B cell (primary cell): ENCODE measurements at regions of chr1 and their contacts with region 1.

Region 1: DNA sequence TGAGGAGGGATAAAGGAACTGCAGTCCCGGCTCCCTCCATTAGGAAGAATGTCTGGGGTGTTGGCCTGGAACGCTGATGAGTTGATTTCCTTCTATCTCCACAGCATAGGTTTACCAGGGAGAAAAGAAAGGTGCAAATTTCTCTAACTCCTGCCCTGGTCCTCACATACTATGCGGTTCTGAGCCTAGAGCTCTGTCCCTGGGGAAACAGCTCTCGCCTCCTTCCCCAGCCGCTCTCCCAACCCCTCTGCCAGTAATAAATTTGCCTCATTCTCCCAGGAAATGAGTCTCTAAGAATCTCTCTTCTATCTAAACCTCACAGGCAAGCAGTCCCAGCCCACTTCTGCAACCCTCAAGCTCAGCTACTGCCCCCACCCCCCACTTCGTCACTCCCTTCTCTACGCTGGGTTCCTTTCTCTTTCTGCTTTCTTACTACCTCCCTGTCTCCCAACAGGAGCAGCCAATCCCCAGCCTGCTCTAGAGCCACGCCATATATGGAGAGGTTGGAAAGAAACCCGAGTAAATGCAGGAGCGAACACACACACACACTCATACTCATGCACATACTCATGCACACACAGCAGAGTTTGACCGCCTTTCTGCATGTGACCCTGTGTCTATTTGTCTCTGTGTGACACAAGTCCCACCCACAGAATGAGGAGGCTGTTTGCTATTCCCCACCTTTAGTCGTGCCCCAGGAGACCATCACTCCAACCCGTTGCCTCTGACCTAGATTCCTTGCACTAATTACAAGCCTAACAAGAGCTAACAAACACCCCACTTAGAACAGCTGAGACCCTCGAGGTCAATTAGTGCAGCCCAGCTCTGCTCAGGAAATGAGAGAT is 13.4 kb downstream of the PLEKHO1 start:
- DNase-seq: peak; percentile 73
- ATAC-seq: peak; percentile 10
- H3K4me3 ChIP-seq: peak overlapping the region; percentile 5 to 70 (median 28)
- H3K4me3 Mint-ChIP-seq: peak overlapping the region; percentile 93
- H3K27ac ChIP-seq: peak overlapping the region; percentile 95
- H3K27ac Mint-ChIP-seq: peak overlapping the region; percentile 99
- H3K4me1 ChIP-seq: peaks cover 78 to 88% of the 10 kb centered on the region in 2 donors
- H3K4me1 Mint-ChIP-seq: peaks cover 85% of the 10 kb centered on the region
- H3K27me3 ChIP-seq: no peaks in the 10 kb centered on the region
- H3K27me3 Mint-ChIP-seq: no peaks in the 10 kb centered on the region
- CTCF ChIP-seq: no peak

Region 2: DNA sequence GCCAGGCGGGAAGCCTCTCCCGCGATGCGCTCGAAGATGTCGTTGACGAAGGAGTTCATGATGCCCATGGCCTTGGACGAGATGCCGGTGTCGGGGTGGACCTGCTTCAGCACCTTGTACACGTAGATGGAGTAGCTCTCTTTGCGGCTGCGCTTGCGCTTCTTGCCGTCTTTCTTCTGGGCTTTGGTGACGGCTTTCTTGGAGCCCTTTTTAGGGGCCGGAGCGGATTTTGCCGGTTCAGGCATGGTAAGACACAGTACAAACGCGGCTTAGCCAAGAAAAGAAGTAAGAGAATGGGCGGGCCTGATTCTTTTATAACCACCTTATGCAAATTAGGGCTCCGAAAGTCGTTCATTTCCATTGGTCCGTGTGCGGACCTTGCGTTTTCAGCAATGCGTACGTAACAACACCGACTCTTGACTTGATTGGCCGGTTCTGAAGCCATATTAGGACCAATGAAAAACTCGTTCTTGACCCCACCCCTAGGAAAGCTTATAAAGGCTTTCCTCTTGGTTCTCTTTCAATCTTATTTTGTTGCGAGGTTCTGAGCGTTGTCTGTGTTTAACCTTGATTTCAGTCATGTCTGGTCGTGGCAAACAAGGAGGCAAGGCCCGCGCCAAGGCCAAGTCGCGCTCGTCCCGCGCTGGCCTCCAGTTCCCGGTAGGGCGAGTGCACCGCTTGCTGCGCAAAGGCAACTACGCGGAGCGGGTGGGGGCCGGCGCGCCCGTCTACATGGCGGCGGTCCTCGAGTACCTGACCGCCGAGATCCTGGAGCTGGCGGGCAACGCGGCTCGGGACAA is 276.5 kb before region 1 on chr1:
- CTCF ChIA-PET with region 1: interaction called, 8 read pairs
- POLR2A ChIA-PET with region 1: interaction called, 16 read pairs
- intact Hi-C with region 1: no loop called
- DNase-seq: peak; percentile 98
- ATAC-seq: peak; percentile 73
- H3K4me3 ChIP-seq: peak overlapping the region; percentile 84 to 97 (median 92)
- H3K4me3 Mint-ChIP-seq: no peak overlapping the region
- H3K27ac ChIP-seq: peak overlapping the region; percentile 89 to 94
- H3K27ac Mint-ChIP-seq: no peak overlapping the region
- H3K4me1 ChIP-seq: peaks cover 23 to 33% of the 10 kb centered on the region in 2 donors
- H3K4me1 Mint-ChIP-seq: peaks cover 11% of the 10 kb centered on the region
- H3K27me3 ChIP-seq: no peaks in the 10 kb centered on the region
- H3K27me3 Mint-ChIP-seq: no peaks in the 10 kb centered on the region
- CTCF ChIP-seq: no peak

Region 3: DNA sequence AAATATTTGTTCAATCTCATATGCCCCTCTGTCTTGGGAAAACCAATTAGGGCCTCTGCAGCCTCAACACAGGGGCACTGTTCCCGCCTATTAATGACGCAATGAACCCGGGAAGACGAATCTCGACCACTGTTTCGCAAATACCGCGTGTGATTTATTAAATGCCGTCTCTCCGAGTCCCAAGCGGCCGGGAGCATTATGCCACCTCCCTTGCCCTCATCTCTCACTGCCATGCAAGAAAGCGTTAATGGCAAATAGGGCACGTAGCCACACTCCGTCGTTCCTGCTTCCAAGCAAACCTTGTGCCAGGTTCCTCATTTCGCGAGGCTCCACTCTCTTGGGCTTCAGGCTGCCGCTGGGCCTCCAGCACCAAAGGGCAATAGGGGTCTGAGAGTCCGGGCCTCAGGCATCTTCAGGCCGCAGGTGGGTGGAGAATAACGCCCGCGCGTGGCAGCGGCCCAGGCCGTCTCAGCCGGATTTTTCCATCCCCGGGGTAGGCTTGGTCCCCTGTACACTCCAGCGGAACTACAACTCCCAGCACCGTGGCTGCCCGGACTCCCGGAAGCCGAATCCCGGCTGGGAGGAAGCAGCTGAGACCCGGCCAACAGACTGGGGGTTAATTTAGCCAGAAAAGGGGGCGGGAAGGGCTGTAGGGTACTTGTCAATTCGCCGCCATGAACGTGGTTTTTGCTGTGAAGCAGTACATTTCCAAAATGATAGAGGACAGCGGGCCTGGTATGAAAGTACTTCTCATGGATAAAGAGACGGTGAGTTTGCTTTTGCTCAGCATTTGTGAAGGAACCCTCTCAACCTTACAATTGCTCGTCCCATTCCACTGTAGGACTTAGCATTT is 95.7 kb before region 1 on chr1 and contains the start of gene VPS45:
- CTCF ChIA-PET with region 1: interaction called, 637 read pairs
- POLR2A ChIA-PET with region 1: interaction called, 11 read pairs
- intact Hi-C with region 1: loop called (anchors 2 kb)
- DNase-seq: peak; percentile 88
- ATAC-seq: peak; percentile 88
- H3K4me3 ChIP-seq: peak within 1 kb of the TSS; percentile 61 to 92 (median 79)
- H3K4me3 Mint-ChIP-seq: peak within 1 kb of the TSS; percentile 98
- H3K27ac ChIP-seq: peak within 1 kb of the TSS; percentile 74 to 85
- H3K27ac Mint-ChIP-seq: peak within 1 kb of the TSS; percentile 97
- H3K4me1 ChIP-seq: peaks cover 0 to 15% of the 10 kb centered on the region in 2 donors
- H3K4me1 Mint-ChIP-seq: peaks cover 32% of the 10 kb centered on the region
- H3K27me3 ChIP-seq: no peaks in the 10 kb centered on the region
- H3K27me3 Mint-ChIP-seq: no peaks in the 10 kb centered on the region
- CTCF ChIP-seq: no peak
- total RNA-seq, gene VPS45: 49.1 and 50.0 TPM in 2 replicates

Region 4: DNA sequence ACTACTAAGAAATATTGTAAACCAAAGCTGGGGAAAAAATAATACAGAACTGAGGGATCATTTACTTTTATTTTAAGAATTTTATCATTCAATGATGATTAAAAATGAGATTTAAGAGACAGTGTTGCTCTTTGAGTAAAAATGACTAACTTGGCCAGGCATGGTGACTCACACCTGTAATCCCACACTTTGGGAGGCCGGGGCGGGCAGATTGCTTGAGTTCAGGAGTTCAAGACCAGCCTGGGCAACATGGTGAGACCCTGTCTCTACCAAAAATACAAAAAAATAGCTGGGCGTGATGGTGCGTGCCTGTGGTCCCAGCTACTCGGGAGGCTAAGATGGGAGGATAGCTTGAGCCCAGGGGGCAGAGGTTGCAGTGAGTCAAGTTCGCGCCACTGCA is 35.2 kb before region 1 on chr1:
- CTCF ChIA-PET with region 1: interaction called, 8 read pairs
- POLR2A ChIA-PET with region 1: interaction called, 6 read pairs
- intact Hi-C with region 1: loop called (anchors 5 kb)
- DNase-seq: no peak
- ATAC-seq: no peak
- H3K4me3 ChIP-seq: no peak overlapping the region
- H3K4me3 Mint-ChIP-seq: no peak overlapping the region
- H3K27ac ChIP-seq: no peak overlapping the region
- H3K27ac Mint-ChIP-seq: no peak overlapping the region
- H3K4me1 ChIP-seq: peaks cover 6 to 11% of the 10 kb centered on the region in 2 donors
- H3K4me1 Mint-ChIP-seq: peaks cover 10% of the 10 kb centered on the region
- H3K27me3 ChIP-seq: no peaks in the 10 kb centered on the region
- H3K27me3 Mint-ChIP-seq: no peaks in the 10 kb centered on the region
- CTCF ChIP-seq: no peak

Region 5: GRCh38 chr1:150149271-150150132 is 13.6 kb before region 1 on chr1 and contains the start of gene PLEKHO1:
- CTCF ChIA-PET with region 1: interaction called, 24 read pairs
- POLR2A ChIA-PET with region 1: interaction called, 139 read pairs
- intact Hi-C with region 1: loop called (anchors 1 kb)
- DNase-seq: peak; percentile 92
- ATAC-seq: peak; percentile 78
- H3K4me3 ChIP-seq: peak within 1 kb of the TSS; percentile 73 to 96 (median 94)
- H3K4me3 Mint-ChIP-seq: peak within 1 kb of the TSS; percentile 98
- H3K27ac ChIP-seq: peak within 1 kb of the TSS; percentile 80 to 95
- H3K27ac Mint-ChIP-seq: peak within 1 kb of the TSS; percentile 99
- H3K4me1 ChIP-seq: peaks cover 52 to 56% of the 10 kb centered on the region in 2 donors
- H3K4me1 Mint-ChIP-seq: peaks cover 68% of the 10 kb centered on the region
- H3K27me3 ChIP-seq: no peaks in the 10 kb centered on the region
- H3K27me3 Mint-ChIP-seq: no peaks in the 10 kb centered on the region
- CTCF ChIP-seq: no peak
- total RNA-seq, gene PLEKHO1: 182 and 186 TPM in 2 replicates

Region 6: DNA sequence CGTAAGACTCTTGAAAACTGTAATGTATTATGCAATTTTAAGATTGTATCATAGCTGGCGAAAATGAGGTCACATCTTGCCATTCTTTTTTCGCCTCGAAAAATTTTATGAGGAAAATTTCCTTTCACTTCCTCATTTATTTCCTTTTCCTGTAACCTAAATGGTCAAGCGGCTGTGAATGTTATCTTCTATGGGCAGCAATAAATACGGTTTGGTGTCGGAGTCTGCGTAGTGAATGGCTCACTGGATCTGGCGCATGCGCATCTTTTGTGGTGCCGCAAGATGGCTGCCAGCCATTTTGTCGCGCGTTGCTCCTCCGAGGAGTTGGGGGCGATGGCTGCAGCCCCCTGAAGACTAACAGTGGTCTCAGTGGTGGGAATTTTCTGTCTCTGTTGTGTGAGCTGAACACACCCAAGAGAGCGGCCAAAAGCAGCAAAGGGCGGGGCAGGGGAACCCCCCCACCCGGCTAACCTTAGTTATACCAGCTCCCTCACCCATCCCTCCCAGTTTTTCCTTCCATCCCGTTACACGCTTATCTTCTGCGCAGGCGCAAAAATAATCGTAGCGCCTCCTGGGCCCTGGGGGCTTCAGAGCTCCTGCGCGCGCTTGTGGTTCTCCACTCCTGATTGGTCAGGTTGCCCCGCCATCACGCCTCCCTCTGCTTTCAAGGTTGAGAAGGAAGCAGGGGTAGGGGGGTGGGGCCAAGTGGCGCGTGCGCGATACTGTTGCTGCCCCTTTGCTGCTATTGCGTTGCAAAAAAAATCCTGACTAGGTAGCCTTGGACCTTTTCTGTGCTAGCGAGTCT is 200.5 kb after region 1 on chr1 and contains the start of gene RPRD2:
- CTCF ChIA-PET with region 1: no interaction called
- POLR2A ChIA-PET with region 1: no interaction called
- intact Hi-C with region 1: loop called (anchors 5 kb)
- DNase-seq: peak; percentile 99
- ATAC-seq: peak; percentile 94
- H3K4me3 ChIP-seq: peak within 1 kb of the TSS; percentile 74 to 99 (median 90)
- H3K4me3 Mint-ChIP-seq: peak within 1 kb of the TSS; percentile 99
- H3K27ac ChIP-seq: peak within 1 kb of the TSS; percentile 87 to 90
- H3K27ac Mint-ChIP-seq: peak within 1 kb of the TSS; percentile 99
- H3K4me1 ChIP-seq: peaks cover 21 to 24% of the 10 kb centered on the region in 2 donors
- H3K4me1 Mint-ChIP-seq: peaks cover 31% of the 10 kb centered on the region
- H3K27me3 ChIP-seq: no peaks in the 10 kb centered on the region
- H3K27me3 Mint-ChIP-seq: no peaks in the 10 kb centered on the region
- CTCF ChIP-seq: no peak
- total RNA-seq, gene RPRD2: 49.1 and 51.4 TPM in 2 replicates